Activated T-helper 1 cell treated with anti-CD3 and anti-CD28 coated beads, Interleukin-12 subunit alpha, Interleukin-12 subunit beta, Interleukin-2, Interleukin-4 antibody, amounts not matched to agents 30 ng/mL and 10 ng/mL and 1 ng/mL, durations not matched to agents 14 hours and 24 hours and 36 hours (primary cell): ENCODE measurements at regions of chr14 and their contacts with region 1.

Region 1: DNA sequence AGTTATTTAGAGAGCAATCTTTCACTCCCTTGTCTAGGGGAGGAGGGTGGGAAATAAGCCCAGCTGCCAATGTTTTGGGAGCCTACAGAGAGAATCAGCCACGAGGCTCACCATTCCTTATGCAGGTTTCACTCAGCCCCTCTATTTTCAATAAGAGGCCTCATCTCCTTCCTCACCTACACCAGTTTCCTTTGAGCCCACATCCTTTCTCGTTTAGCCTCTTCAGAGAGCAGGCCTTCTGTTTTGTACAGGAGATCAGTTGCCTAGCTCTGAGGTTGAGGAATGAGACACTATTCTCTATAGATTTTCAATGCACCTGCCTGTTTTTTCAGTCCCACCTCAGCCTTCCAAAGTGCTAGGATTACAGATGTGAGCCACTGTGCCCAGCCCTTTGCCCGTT is 17.9 kb downstream of the SNAPC1 start:
- DNase-seq: peak; percentile 26
- H3K4me3 Mint-ChIP-seq: peak overlapping the region; percentile 68
- H3K27ac Mint-ChIP-seq: peak overlapping the region; percentile 89
- H3K4me1 Mint-ChIP-seq: peaks cover 42% of the 10 kb centered on the region
- H3K27me3 Mint-ChIP-seq: no peaks in the 10 kb centered on the region

Region 2: DNA sequence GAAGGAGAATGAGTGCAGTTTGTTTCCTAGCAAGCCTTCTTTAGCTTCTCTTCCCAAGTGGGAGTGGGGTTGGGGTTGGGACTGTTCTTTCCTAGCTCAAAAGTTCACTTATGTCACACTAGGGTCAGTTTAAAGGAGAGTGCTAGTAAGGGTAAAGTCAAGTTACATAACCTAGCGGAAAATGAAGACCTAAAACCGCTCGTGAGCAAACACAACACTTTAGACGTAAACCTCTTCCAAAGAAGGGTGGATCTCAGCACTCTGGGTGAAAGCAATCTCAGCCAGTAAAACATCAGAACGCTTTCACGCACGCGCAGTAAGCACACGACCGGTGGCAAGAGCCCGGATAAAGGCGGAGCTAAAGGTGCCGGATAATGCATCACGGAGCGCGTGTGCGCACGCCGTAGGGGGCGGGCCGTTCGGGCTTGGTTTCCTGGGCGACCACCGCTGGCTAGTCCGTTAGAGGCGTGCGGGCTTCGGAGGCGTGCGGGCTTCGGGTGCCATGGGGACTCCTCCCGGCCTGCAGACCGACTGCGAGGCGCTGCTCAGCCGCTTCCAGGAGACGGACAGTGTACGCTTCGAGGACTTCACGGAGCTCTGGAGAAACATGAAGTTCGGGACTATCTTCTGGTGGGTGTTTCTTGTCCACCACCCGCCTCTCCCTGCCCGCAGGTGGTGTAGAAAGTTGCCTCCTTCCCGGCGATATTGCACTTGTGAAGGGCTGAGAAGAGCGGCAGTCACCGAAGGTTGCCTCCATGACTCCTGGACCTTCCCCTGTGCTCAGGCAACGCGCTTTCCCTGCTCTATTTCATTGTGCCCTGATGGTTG is 18.0 kb before region 1 on chr14 and contains the start of gene SNAPC1:
- intact Hi-C with region 1: loop called (anchors 2 kb)
- DNase-seq: peak; percentile 97
- H3K4me3 Mint-ChIP-seq: peak within 1 kb of the TSS; percentile 91
- H3K27ac Mint-ChIP-seq: peak within 1 kb of the TSS; percentile 90
- H3K4me1 Mint-ChIP-seq: peaks cover 59% of the 10 kb centered on the region
- H3K27me3 Mint-ChIP-seq: peaks cover 3% of the 10 kb centered on the region
- total RNA-seq, gene SNAPC1: 10.8 and 11.0 TPM in 2 replicates